ENCODE measurements at regions of chr11 and their contacts with region 1.

Region 1: GRCh38 chr11:134275534-134276395 is at the start of gene GLB1L3:
- DNase-seq: peak; percentile 30
- ATAC-seq: peak; percentile 72
- H3K4me3 Mint-ChIP-seq: peak within 1 kb of the TSS; percentile 76
- H3K27ac Mint-ChIP-seq: no peak within 1 kb of the TSS
- H3K4me1 Mint-ChIP-seq: peaks cover 21% of the 10 kb centered on the region
- H3K27me3 Mint-ChIP-seq: peaks cover 71% of the 10 kb centered on the region
- CTCF ChIP-seq: no peak
- total RNA-seq, gene GLB1L3: not detected in 2 replicates

Region 2: DNA sequence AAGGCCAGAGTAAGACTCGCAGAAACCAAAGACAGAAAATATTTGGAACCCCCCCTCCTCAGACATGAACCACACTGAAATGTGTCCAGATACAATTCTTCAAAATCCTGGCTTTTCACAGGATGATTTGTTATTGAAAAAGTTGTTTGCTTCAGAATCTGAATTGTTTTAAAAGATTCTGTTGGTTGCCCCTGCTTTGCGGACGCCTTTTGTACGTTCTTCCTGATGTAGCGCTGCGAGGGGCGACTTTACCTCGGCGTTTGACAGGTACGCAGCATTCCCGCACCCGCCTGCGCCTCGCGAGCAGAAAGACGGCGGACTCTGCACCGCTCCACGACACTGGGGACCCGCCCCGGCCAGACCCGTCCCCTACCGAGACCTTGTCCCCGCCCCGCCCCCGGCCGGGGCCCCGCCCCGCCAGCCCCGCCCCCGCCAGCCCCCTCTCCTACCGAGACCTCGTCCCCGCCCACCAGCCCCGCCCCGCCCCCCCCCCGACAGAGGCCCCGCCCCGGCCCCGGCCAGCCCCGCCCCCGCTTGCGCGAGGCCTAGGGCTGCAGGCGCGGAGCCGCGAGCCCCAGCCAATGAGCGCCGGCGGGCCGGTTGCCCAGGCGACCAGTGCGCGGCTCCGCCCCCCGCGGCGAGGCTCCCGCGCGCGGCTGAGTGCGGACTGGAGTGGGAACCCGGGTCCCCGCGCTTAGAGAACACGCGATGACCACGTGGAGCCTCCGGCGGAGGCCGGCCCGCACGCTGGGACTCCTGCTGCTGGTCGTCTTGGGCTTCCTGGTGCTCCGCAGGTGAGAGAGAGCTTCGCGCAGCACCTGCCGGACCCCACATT is 55.8 kb after region 1 on chr11 and contains the start of gene GLB1L2:
- CTCF ChIA-PET with region 1: no interaction called
- POLR2A ChIA-PET with region 1: no interaction called
- intact Hi-C with region 1: loop called (anchors 5 kb)
- DNase-seq: peak; percentile 69
- ATAC-seq: peak; percentile 96
- H3K4me3 Mint-ChIP-seq: peak within 1 kb of the TSS; percentile 80
- H3K27ac Mint-ChIP-seq: no peak within 1 kb of the TSS
- H3K4me1 Mint-ChIP-seq: peaks cover 9% of the 10 kb centered on the region
- H3K27me3 Mint-ChIP-seq: peaks cover 48% of the 10 kb centered on the region
- CTCF ChIP-seq: no peak
- total RNA-seq, gene GLB1L2: 0.33 and 0.56 TPM in 2 replicates

Region 3: GRCh38 chr11:134343646-134344045 is 67.9 kb after region 1 on chr11:
- CTCF ChIA-PET with region 1: no interaction called
- POLR2A ChIA-PET with region 1: no interaction called
- intact Hi-C with region 1: loop called (anchors 2 kb)
- DNase-seq: no peak
- ATAC-seq: no peak
- H3K4me3 Mint-ChIP-seq: no peak overlapping the region
- H3K27ac Mint-ChIP-seq: no peak overlapping the region
- H3K4me1 Mint-ChIP-seq: no peaks in the 10 kb centered on the region
- H3K27me3 Mint-ChIP-seq: no peaks in the 10 kb centered on the region
- CTCF ChIP-seq: no peak